Right ventricle myocardium inferior (tissue), 1 donor: ENCODE measurements at regions of chr4 and their contacts with region 1.

Region 1: DNA sequence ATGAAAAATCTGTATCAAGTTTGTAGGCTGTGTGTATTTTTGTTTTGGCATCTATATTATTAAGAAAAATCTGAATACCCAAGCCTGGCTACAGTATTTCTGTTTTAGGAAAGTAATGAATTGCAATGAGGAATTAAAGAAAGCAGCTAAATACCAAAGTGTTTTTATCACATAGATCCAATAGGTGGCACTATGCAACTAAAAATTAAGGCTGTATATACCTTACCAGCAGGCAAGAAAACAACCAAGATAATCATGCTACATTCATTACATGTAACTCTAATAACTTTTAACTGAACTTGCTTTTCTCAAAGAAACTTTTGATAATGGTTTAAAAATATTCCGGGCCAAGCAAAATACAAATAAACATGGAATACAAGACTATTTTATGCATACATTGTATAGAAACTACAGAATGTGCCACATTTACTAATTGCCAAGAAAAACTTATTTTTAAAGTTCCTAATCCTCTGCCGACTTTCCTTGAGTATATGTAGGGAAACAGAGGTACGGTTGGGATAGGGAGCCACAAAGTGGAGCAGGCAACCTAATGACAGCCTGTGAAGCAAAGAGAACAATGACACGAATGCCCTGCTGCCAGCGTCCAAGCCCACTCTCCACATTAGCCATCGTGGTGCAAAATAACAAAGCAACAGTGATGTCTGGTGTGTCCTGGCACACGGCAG is 63.7 kb downstream of the SEC24D start:
- DNase-seq: no peak
- ATAC-seq: peak; percentile 73

Region 2: DNA sequence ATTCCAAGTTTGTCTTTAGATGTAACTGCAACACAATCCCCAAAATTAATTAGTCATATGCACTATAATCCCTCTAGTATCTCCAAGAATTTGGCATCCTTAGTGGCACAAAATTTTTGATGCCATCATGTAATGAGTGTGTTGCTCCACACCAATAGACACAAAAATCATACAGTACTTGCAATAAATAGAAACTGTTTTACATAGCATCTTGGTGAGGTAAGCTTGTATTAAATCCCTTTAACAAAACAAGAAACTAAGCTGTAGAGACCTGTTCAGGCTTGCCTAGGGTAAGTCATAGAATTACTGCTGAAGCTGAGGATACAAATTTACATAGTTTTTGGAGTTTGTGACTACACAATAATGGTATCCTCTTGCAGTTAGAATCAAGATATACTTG is 354.9 kb before region 1 on chr4:
- intact Hi-C with region 1: no loop called
- DNase-seq: no peak
- ATAC-seq: no peak

Region 3: GRCh38 chr4:118557298-118557851 is 214.8 kb before region 1 on chr4:
- intact Hi-C with region 1: no loop called
- DNase-seq: no peak
- ATAC-seq: no peak

Region 4: DNA sequence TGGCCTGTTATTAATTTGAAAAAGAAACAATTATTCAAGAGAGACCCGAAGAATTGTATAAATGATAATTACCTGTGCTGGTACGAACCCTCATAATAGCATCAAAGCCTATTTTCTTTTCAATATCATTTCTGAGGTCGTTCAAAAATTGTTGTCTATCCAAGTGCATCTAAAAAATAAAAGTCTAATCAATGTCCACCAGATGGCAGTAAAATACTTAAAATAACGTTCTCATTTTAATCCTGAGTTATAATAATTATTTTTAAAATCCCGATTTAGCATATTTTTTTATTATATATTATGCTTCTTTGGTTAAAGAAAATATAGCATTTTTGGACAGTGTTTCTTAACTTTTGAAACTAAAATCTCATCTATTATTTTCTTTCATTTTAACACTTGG is 31.4 kb before region 1 on chr4:
- intact Hi-C with region 1: loop called (anchors 2 kb)
- DNase-seq: no peak
- ATAC-seq: no peak

Region 5: GRCh38 chr4:118968005-118968404 is 195.8 kb after region 1 on chr4:
- intact Hi-C with region 1: loop called (anchors 1 kb)
- DNase-seq: no peak
- ATAC-seq: peak; percentile 85